WTC11 (cell line): ENCODE measurements at regions of chr3 and their contacts with region 1.

Region 1: GRCh38 chr3:141460097-141460704 is 26.6 kb upstream of the RASA2 start:
- DNase-seq: peak; percentile 93
- ATAC-seq: peak; percentile 99
- H3K4me3 Mint-ChIP-seq: no peak overlapping the region
- H3K27ac Mint-ChIP-seq: no peak overlapping the region
- H3K4me1 Mint-ChIP-seq: peaks cover 11% of the 10 kb centered on the region
- H3K27me3 Mint-ChIP-seq: peaks cover 4% of the 10 kb centered on the region
- CTCF ChIP-seq: peak; percentile 57

Region 2: GRCh38 chr3:141174674-141175073 is 285.5 kb before region 1 on chr3:
- CTCF ChIA-PET with region 1: no interaction called
- POLR2A ChIA-PET with region 1: no interaction called
- DNase-seq: no peak
- ATAC-seq: peak; percentile 16; the same call in 1 of the 2 replicates
- H3K4me3 Mint-ChIP-seq: no peak overlapping the region
- H3K27ac Mint-ChIP-seq: no peak overlapping the region
- H3K4me1 Mint-ChIP-seq: peaks cover 18% of the 10 kb centered on the region
- H3K27me3 Mint-ChIP-seq: no peaks in the 10 kb centered on the region
- CTCF ChIP-seq: no peak

Region 3: GRCh38 chr3:141561426-141562034 is 101.3 kb after region 1 on chr3:
- CTCF ChIA-PET with region 1: interaction called, 47 read pairs
- POLR2A ChIA-PET with region 1: interaction called, 4 read pairs
- DNase-seq: no peak
- ATAC-seq: no peak; the same call in 1 of the 2 replicates
- H3K4me3 Mint-ChIP-seq: no peak overlapping the region
- H3K27ac Mint-ChIP-seq: no peak overlapping the region
- H3K4me1 Mint-ChIP-seq: no peaks in the 10 kb centered on the region
- H3K27me3 Mint-ChIP-seq: no peaks in the 10 kb centered on the region
- CTCF ChIP-seq: peak; percentile 90